ENCODE measurements at regions of chr1 and their contacts with region 1.

Region 1: GRCh38 chr1:169348383-169349036 is 19.1 kb downstream of the NME7 start:
- H3K4me3 Mint-ChIP-seq: no peak overlapping the region
- H3K27ac Mint-ChIP-seq: no peak overlapping the region
- H3K4me1 Mint-ChIP-seq: no peaks in the 10 kb centered on the region
- H3K27me3 Mint-ChIP-seq: no peaks in the 10 kb centered on the region

Region 2: GRCh38 chr1:168439456-168440375 is 908.8 kb before region 1 on chr1:
- intact Hi-C with region 1: loop called (anchors 5 kb)
- H3K4me3 Mint-ChIP-seq: peak overlapping the region; percentile 45
- H3K27ac Mint-ChIP-seq: no peak overlapping the region
- H3K4me1 Mint-ChIP-seq: peaks cover 11% of the 10 kb centered on the region
- H3K27me3 Mint-ChIP-seq: no peaks in the 10 kb centered on the region

Region 3: DNA sequence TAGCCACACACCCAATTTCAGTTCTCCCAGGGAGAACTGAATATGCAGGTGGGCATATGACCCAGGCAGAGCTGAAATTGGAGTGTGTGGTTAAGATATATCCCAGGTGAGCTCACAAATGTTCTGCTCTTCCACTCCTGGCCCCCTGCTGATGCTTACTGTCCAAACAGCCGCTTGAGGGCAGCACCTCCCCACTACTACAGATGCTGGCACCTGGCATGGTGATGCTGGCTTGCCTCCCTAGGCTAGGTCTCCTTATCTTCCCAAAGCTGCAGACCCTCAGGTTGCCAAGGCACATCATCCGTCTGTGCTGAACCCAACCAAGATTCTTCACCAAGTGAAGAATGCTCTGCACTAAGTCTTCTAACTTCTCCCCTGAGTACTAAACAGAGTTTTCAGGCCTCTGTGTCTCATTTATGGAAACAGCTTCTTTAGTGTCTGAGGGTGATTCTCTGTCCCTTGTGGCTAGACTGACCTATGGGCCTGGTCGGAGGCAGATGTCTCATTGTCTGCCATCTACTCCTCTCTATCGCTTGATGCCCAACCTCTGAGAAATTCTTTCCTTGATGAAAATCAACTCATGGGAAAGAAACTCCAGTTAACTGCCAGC is 744.9 kb before region 1 on chr1:
- intact Hi-C with region 1: loop called (anchors 2 kb)
- H3K4me3 Mint-ChIP-seq: no peak overlapping the region
- H3K27ac Mint-ChIP-seq: no peak overlapping the region
- H3K4me1 Mint-ChIP-seq: no peaks in the 10 kb centered on the region
- H3K27me3 Mint-ChIP-seq: no peaks in the 10 kb centered on the region

Region 4: DNA sequence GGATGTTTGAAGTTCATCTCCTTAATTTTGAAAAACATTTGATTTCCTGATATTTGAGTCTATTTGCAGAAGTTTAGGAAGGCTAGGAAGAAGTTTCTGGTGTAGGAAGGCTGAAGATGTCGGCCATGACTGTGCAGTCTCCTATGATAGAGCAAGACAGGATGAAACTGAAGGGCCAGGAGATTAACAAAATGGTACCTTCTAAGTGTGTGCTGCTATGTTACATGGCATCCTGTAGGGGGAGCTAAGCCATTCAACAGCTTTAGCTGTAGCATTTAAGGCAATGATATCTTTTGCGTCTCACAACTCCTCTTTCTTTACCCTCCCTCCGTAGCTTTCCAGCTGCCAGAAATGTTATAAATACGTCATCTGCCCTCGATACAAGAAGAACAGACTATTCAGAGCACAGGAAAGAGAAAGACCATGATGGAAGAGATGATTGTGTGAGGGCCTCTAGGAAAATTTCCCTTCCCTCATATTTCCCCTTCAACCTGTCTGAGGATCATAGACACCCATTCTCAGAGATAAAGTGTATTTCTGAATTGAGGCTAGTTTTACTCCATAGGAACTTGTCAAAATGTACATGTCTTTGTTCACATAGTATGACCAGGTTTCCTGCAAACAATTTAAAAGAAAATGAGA is 711.0 kb before region 1 on chr1:
- intact Hi-C with region 1: loop called (anchors 1 kb)
- H3K4me3 Mint-ChIP-seq: no peak overlapping the region
- H3K27ac Mint-ChIP-seq: no peak overlapping the region
- H3K4me1 Mint-ChIP-seq: no peaks in the 10 kb centered on the region
- H3K27me3 Mint-ChIP-seq: no peaks in the 10 kb centered on the region

Region 5: DNA sequence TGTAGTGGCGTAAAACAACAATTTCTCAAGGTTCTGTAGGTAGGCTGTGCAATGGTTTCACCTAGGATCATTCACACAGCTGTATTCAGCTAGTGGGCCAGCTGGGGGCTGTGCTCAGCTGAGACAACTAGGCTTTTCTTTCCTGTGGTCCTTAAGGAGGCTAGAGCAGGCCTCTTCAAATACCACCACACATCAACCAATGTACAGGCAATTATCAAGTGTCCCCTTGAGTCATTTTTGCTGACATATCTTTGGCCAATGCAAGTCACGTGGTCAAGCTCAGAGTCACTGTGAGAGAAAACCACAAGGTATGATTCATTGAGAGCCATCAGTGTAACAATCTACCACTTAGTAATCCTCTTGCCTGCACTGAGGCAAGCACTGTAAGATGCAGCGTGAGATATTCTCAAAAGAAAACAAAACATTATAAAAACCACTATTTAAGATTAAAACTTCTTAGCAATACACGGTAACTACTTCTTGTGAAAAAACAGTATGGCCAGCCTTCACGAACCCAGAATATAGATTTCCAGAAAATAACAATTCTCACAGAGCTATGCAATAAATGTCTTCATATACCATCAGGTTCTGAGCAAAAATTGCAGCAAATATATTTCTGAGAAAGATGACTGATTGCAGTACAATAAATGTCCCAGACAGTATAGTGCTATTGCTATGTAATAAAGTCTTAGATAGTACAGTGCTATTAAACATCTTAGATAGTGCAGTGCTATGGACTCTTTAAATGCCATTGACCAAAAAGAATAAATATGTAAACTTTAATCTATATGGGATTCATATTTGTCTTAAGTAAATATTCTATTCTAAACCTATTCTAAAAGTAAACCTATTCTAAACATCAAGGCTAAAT is 36.2 kb before region 1 on chr1:
- intact Hi-C with region 1: no loop called
- H3K4me3 Mint-ChIP-seq: no peak overlapping the region
- H3K27ac Mint-ChIP-seq: no peak overlapping the region
- H3K4me1 Mint-ChIP-seq: peaks cover 8% of the 10 kb centered on the region
- H3K27me3 Mint-ChIP-seq: no peaks in the 10 kb centered on the region